IMR-90 (cell line): ENCODE measurements at regions of chr11 and their contacts with region 1.

Region 1: GRCh38 chr11:72772978-72773690 is 20.7 kb downstream of the STARD10 start:
- DNase-seq: peak; percentile 93
- ATAC-seq: peak; percentile 80
- H3K4me3 ChIP-seq: no peak overlapping the region
- H3K27ac ChIP-seq: peak overlapping the region; percentile 22; the same call in 1 of the 2 replicates
- H3K4me1 ChIP-seq: peaks cover 28% of the 10 kb centered on the region
- H3K27me3 ChIP-seq: no peaks in the 10 kb centered on the region
- CTCF ChIP-seq: no peak
- POLR2A ChIP-seq: no peak
- RAD21 ChIP-seq: no peak

Region 2: DNA sequence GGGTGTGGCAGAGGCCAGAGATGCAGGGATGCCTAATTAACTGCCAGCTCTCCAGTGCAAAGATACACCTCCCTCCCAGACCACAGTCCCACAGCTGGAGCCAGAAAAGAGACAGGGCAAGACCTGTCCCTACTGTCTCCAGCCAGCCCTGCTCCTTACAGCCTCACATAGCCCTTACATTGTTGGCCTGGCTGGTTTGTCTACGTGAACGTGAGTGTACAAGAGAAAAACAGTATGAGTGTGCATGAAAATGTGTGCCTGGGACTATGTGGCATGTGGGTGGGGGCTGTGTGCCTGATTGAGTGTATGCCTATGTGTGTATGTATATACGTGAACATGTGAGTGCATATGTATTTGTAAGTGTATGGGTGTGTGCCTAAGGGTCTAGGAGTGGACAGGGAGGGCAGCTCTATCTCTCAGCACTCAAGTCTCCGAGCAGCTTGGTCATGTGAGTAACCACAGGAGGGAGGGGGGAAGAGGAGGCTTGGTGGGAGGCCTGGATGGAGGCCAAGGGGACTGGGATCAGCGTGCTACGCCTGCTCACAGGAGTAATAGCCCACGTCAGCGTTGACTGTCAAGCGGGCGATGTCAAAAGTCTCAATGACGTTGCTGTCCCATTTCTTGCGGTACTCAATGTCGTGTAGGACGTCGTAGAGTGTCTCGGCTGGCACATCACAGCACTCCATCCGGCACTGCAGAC is 14.3 kb before region 1 on chr11:
- CTCF ChIA-PET with region 1: no interaction called
- POLR2A ChIA-PET with region 1: no interaction called
- dilution Hi-C with region 1: no loop called
- in situ Hi-C with region 1: no loop called
- intact Hi-C with region 1: loop called (anchors 1 kb)
- DNase-seq: peak; percentile 96
- ATAC-seq: peak; percentile 76
- H3K4me3 ChIP-seq: no peak overlapping the region
- H3K27ac ChIP-seq: no peak overlapping the region
- H3K4me1 ChIP-seq: peaks cover 13% of the 10 kb centered on the region
- H3K27me3 ChIP-seq: no peaks in the 10 kb centered on the region
- CTCF ChIP-seq: no peak
- POLR2A ChIP-seq: no peak
- RAD21 ChIP-seq: no peak